Gastrocnemius medialis (tissue), 4 donors: ENCODE measurements at regions of chr1 and their contacts with region 1.

Region 1: GRCh38 chr1:228131766-228132165 is 8.3 kb upstream of the GUK1 start:
- DNase-seq: no peak
- ATAC-seq: no peak
- H3K4me3 ChIP-seq: no peak overlapping the region
- H3K27ac ChIP-seq: no peak overlapping the region
- H3K4me1 ChIP-seq: peaks cover 3 to 6% of the 10 kb centered on the region in 2 donors
- H3K27me3 ChIP-seq: no peaks in the 10 kb centered on the region
- CTCF ChIP-seq: no peak
- POLR2A ChIP-seq: no peak

Region 2: DNA sequence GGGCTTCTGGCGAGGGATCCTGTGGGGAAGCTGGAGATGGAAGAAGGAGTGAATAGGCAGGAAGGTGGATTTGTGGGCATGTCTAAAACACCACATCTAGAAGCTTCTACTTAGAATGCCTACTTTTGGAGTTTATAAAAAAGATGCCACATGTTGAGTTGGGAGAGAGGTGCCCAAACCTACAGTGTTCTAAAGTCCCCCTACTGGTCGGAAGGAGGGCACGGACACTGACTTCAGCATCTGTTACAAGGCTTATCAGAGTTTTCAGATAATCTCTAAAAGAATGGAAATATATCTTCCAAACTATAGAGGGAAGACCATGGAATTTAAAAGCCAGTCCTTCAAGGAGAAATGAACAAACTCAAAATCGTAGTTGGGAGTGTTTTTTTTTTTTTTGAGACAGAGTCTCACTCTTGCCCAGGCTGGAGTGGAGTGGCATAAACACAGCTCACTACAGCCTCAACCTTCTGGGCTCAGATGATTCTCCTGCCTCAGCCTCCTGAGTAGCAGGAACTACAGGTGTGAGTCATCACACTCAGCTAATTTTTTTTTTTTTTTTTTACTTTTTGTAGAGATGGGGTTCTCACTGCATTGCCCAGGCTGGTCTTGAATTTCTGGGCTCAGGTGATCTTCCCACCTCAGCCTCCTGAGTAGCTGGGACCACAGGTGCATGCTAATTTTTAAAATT is 48.6 kb after region 1 on chr1:
- in situ Hi-C with region 1: no loop called
- intact Hi-C with region 1: loop called (anchors 5 kb)
- DNase-seq: no peak
- ATAC-seq: no peak
- H3K4me3 ChIP-seq: no peak overlapping the region
- H3K27ac ChIP-seq: peak overlapping the region; percentile 61 to 69 (median 66)
- H3K4me1 ChIP-seq: peaks cover 13% of the 10 kb centered on the region in 2 donors
- H3K27me3 ChIP-seq: no peaks in the 10 kb centered on the region
- CTCF ChIP-seq: peak in 1 of 5 experiments; percentile 32
- POLR2A ChIP-seq: no peak

Region 3: GRCh38 chr1:228515200-228515834 is 383.6 kb after region 1 on chr1:
- in situ Hi-C with region 1: no loop called
- intact Hi-C with region 1: loop called (anchors 2 kb)
- DNase-seq: no peak
- ATAC-seq: no peak
- H3K4me3 ChIP-seq: no peak overlapping the region
- H3K27ac ChIP-seq: no peak overlapping the region
- H3K4me1 ChIP-seq: no peaks in the 10 kb centered on the region
- H3K27me3 ChIP-seq: peaks cover 0 to 9% (median 0%) of the 10 kb centered on the region in 3 donors
- CTCF ChIP-seq: peak; percentile 32 to 59 (median 45)
- POLR2A ChIP-seq: no peak